ENCODE measurements at regions of chr10 and their contacts with region 1.

Region 1: GRCh38 chr10:91409869-91410637 is at the start of gene HECTD2:
- DNase-seq: peak; percentile 94
- ATAC-seq: peak; percentile 81
- H3K4me3 ChIP-seq: peak within 1 kb of the TSS; percentile 71 to 96 (median 78)
- H3K4me3 Mint-ChIP-seq: peak within 1 kb of the TSS; percentile 84
- H3K27ac ChIP-seq: peak within 1 kb of the TSS; percentile 92 to 94
- H3K27ac Mint-ChIP-seq: peak within 1 kb of the TSS; percentile 88
- H3K4me1 ChIP-seq: peaks cover 8 to 13% of the 10 kb centered on the region in 2 donors
- H3K4me1 Mint-ChIP-seq: peaks cover 14% of the 10 kb centered on the region
- H3K27me3 ChIP-seq: no peaks in the 10 kb centered on the region
- H3K27me3 Mint-ChIP-seq: no peaks in the 10 kb centered on the region
- CTCF ChIP-seq: peak; percentile 24
- total RNA-seq, gene HECTD2: 7.9 and 10.7 TPM in 2 replicates

Region 2: DNA sequence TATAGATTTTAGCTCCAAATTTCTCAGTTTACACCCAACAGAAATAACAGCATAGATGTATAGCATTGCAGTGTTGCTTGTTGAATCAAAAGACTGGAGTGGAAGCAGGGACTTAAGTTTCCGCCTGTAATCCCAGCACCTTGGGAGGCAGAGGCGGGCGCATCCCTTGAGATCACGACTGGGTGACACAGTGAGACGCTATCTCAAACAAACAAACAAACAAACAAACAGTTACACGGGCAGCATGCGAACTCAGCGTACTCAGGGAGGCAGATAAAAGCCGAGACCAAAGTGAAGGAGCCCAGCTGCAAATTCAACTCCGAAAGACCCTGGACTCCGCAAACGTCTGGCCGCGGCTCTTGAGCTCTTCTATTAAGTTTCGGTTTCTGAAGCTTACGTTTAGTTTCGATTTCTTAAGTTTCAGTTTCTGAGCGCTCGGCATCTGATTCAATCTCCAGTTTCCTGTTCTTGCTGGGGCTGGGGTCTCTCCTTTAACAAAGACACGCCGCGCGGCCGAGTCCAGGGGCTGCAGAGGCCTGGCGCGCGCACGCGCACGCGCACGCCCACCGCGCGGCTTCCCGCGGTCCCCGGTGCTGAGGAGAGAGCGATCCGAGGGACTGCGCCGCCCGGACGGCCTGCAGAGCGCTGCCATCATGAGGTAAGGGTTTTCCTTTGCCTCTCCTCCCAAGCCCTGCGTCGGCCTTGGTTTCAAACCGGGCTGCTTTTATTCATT is 1995.7 kb before region 1 on chr10 and contains the start of gene IFIT5:
- CTCF ChIA-PET with region 1: no interaction called
- POLR2A ChIA-PET with region 1: no interaction called
- intact Hi-C with region 1: loop called (anchors 10 kb)
- DNase-seq: peak; percentile 88
- ATAC-seq: peak; percentile 71
- H3K4me3 ChIP-seq: peak within 1 kb of the TSS; percentile 71 to 98 (median 90)
- H3K4me3 Mint-ChIP-seq: peak within 1 kb of the TSS; percentile 92
- H3K27ac ChIP-seq: peak within 1 kb of the TSS; percentile 91 to 93
- H3K27ac Mint-ChIP-seq: peak within 1 kb of the TSS; percentile 95
- H3K4me1 ChIP-seq: peaks cover 29 to 38% of the 10 kb centered on the region in 2 donors
- H3K4me1 Mint-ChIP-seq: peaks cover 44% of the 10 kb centered on the region
- H3K27me3 ChIP-seq: no peaks in the 10 kb centered on the region
- H3K27me3 Mint-ChIP-seq: no peaks in the 10 kb centered on the region
- CTCF ChIP-seq: no peak
- total RNA-seq, gene IFIT5: 23.2 and 25.0 TPM in 2 replicates

Region 3: DNA sequence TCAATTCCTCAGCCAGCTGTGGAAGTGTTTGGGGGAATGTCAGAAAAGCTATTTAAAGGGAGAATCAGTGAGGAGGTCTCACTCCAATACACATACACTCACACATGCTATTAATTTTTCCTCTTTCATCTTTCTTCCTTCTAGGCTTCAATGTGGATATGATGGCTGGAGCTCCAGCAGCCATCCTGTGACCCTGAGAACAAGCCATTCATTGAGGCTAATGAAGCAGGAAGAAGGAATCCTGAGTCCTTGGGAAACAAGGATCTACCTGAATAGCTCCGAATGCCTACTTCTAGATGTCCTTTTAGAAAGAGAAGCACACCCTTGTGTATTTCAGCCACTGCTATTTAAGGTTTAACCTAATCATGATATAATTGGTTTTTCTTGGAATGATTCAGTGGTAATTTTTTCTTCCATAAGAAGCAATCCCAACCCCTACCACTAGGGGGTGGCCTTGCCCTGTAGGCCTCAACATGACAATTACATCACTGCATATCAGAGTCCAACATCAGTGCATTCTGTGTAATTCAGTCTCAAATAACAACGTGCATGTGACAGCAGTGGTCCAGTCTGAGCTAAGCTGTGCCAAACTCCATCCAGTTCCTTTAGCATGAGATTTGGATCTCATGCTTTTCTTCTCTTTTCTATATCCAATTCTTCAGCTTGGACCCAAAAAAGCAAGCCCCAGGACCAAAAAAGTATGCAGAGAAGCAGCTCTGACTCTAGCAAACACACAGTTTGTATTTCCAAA is 403.9 kb before region 1 on chr10:
- CTCF ChIA-PET with region 1: no interaction called
- POLR2A ChIA-PET with region 1: no interaction called
- intact Hi-C with region 1: loop called (anchors 2 kb)
- DNase-seq: peak; percentile 79
- ATAC-seq: peak; percentile 89
- H3K4me3 ChIP-seq: peak overlapping the region in 3 of 5 experiments; percentile 2 to 47 (median 15)
- H3K4me3 Mint-ChIP-seq: peak overlapping the region; percentile 78
- H3K27ac ChIP-seq: peak overlapping the region; percentile 74 to 79
- H3K27ac Mint-ChIP-seq: peak overlapping the region; percentile 87
- H3K4me1 ChIP-seq: peaks cover 35 to 38% of the 10 kb centered on the region in 2 donors
- H3K4me1 Mint-ChIP-seq: peaks cover 40% of the 10 kb centered on the region
- H3K27me3 ChIP-seq: no peaks in the 10 kb centered on the region
- H3K27me3 Mint-ChIP-seq: no peaks in the 10 kb centered on the region
- CTCF ChIP-seq: peak; percentile 98

Region 4: DNA sequence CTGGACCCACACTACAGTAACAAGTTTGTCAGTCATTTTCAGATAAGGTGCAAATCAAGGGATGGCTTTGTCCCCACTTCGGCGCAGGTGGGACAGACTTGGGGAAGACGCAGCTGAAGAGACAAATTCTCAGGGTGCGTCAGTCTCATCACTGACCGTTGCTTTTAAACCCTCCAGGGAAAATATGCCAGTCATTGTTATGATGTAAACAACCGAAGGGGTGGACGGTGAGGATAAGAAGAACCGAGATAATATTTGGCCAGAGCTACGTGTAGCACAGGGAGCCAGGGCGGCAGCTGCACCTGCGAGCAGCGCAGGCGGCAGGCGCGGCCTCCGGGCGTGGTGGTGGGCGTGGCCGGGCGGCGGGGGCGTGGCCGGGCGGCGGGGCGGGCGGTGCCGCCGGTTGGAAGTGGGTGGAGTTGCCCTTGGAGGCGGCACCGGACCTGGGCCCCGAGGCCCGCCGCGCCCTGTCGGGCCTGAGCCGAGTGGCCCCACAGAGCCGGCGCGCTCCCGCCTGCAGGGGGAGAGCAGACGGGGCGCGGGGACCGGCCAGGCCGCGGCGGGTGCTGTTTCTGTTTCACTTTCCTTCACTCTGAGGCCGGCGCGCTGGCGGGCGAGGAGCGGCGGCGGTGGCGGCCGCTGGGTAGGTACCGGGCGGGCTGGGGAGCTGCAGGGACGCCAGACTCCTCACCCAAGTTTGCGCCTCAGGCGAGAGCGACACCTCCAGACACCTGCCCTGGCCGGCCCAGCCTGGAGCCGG is 189.7 kb before region 1 on chr10 and contains the start of gene PCGF5:
- CTCF ChIA-PET with region 1: no interaction called
- POLR2A ChIA-PET with region 1: no interaction called
- intact Hi-C with region 1: loop called (anchors 5 kb)
- DNase-seq: peak; percentile 96
- ATAC-seq: peak; percentile 94
- H3K4me3 ChIP-seq: peak within 1 kb of the TSS; percentile 60 to 89 (median 76)
- H3K4me3 Mint-ChIP-seq: peak within 1 kb of the TSS; percentile 92
- H3K27ac ChIP-seq: peak within 1 kb of the TSS; percentile 71 to 90
- H3K27ac Mint-ChIP-seq: peak within 1 kb of the TSS; percentile 97
- H3K4me1 ChIP-seq: peaks cover 34 to 36% of the 10 kb centered on the region in 2 donors
- H3K4me1 Mint-ChIP-seq: peaks cover 68% of the 10 kb centered on the region
- H3K27me3 ChIP-seq: no peaks in the 10 kb centered on the region
- H3K27me3 Mint-ChIP-seq: no peaks in the 10 kb centered on the region
- CTCF ChIP-seq: peak; percentile 14
- total RNA-seq, gene PCGF5: 102 TPM in 2 replicates

Region 5: DNA sequence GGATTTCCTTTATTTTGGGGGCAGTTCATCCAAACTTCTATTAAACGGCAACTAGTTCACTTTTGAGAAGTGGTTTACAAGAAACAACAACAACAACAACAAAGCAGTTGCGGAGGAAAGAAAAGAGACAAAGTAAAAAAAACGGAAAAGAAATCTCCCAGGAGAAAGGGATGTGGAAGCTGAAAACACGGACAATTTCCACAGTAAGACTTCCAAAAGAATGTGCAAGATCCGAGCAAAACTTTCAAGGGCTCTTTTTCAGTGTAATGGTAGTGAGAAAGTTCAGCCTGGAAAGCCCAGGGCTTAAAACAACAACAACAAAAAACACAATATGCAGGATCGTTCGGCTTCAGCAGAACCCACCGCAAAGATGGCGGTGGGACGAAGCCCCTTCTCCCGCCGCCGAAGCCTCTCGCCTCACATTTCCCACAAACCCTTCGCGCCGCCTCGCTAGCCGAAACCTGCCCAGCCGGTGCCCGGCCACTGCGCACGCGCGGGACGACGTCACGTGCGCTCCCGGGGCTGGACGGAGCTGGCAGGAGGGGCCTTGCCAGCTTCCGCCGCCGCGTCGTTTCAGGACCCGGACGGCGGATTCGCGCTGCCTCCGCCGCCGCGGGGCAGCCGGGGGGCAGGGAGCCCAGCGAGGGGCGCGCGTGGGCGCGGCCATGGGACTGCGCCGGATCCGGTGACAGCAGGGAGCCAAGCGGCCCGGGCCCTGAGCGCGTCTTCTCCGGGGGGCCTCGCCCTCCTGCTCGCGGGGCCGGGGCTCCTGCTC is 388.0 kb after region 1 on chr10 and contains the start of gene TNKS2:
- CTCF ChIA-PET with region 1: no interaction called
- POLR2A ChIA-PET with region 1: no interaction called
- intact Hi-C with region 1: loop called (anchors 1 kb)
- DNase-seq: peak; percentile 96
- ATAC-seq: peak; percentile 75
- H3K4me3 ChIP-seq: peak within 1 kb of the TSS; percentile 77 to 91 (median 83)
- H3K4me3 Mint-ChIP-seq: peak within 1 kb of the TSS; percentile 97
- H3K27ac ChIP-seq: peak within 1 kb of the TSS; percentile 91 to 97
- H3K27ac Mint-ChIP-seq: peak within 1 kb of the TSS; percentile 99
- H3K4me1 ChIP-seq: peaks cover 34 to 36% of the 10 kb centered on the region in 2 donors
- H3K4me1 Mint-ChIP-seq: peaks cover 62% of the 10 kb centered on the region
- H3K27me3 ChIP-seq: no peaks in the 10 kb centered on the region
- H3K27me3 Mint-ChIP-seq: no peaks in the 10 kb centered on the region
- CTCF ChIP-seq: no peak
- total RNA-seq, gene TNKS2: 45.8 and 48.1 TPM in 2 replicates

Region 6: GRCh38 chr10:92848441-92849233 is 1438.6 kb after region 1 on chr10 and contains the start of gene EXOC6:
- CTCF ChIA-PET with region 1: interaction called, 3 read pairs
- POLR2A ChIA-PET with region 1: no interaction called
- intact Hi-C with region 1: loop called (anchors 5 kb)
- DNase-seq: peak; percentile 96
- ATAC-seq: peak; percentile 88
- H3K4me3 ChIP-seq: peak within 1 kb of the TSS; percentile 61 to 83 (median 65)
- H3K4me3 Mint-ChIP-seq: peak within 1 kb of the TSS; percentile 91
- H3K27ac ChIP-seq: peak within 1 kb of the TSS; percentile 84 to 85
- H3K27ac Mint-ChIP-seq: peak within 1 kb of the TSS; percentile 93
- H3K4me1 ChIP-seq: peaks cover 23 to 26% of the 10 kb centered on the region in 2 donors
- H3K4me1 Mint-ChIP-seq: peaks cover 34% of the 10 kb centered on the region
- H3K27me3 ChIP-seq: no peaks in the 10 kb centered on the region
- H3K27me3 Mint-ChIP-seq: no peaks in the 10 kb centered on the region
- CTCF ChIP-seq: peak; percentile 54
- total RNA-seq, gene EXOC6: 22.6 and 25.6 TPM in 2 replicates